Left ventricle myocardium inferior (tissue), 1 donor: ENCODE measurements at regions of chr1 and their contacts with region 1.

Region 1: GRCh38 chr1:89524369-89525168 is at the start of gene LRRC8B:
- DNase-seq: peak; percentile 93
- H3K4me3 ChIP-seq: peak within 1 kb of the TSS; percentile 85
- H3K27ac ChIP-seq: peak within 1 kb of the TSS; percentile 90
- H3K4me1 ChIP-seq: peaks cover 42% of the 10 kb centered on the region
- H3K27me3 ChIP-seq: no peaks in the 10 kb centered on the region
- CTCF ChIP-seq: no peak
- total RNA-seq, gene LRRC8B: 3.6 TPM

Region 2: DNA sequence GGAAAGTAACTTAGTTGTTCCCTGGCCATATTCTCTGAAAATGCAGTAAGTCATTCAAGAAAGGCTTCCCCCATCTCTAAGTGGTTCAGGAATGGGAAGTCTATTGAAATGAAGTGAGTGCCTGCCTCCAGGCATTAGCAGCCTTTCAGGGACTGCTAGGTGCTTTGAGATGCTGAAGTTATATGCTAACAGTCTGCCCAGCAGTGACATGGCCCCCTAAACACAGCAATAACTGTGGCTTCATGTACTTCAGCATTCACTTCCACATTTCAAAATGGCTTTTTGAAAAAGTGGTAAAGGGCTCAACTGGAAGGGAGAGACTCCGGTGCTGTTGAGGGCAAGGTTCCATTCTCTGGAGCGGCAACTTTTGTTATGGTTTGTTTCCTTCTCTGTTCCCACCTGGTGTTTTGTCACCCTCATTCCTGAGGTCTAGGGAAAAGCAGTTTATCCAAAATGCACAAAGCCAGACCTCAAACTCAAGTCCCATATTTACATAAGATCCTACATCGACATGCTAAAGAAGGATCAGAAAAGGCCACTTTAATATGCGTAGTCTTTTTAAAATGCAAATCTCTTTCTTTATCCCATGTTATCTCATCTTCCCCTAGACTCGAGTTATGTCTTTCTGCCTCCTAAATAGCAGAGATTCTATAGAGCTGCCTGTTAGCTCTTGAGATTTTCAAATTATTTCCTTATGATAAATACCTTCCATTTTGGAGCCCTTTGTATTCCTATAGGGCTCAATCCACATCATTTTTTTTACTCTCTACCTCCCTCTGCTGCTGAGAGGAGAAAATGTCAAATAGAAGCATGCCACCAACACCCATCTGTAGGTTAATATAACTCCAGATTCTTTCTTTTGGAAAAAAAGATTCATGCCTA is 74.1 kb after region 1 on chr1:
- intact Hi-C with region 1: loop called (anchors 10 kb)
- DNase-seq: no peak
- H3K4me3 ChIP-seq: no peak overlapping the region
- H3K27ac ChIP-seq: no peak overlapping the region
- H3K4me1 ChIP-seq: peaks cover 16% of the 10 kb centered on the region
- H3K27me3 ChIP-seq: no peaks in the 10 kb centered on the region
- CTCF ChIP-seq: peak; percentile 82